Pancreas (tissue), 10 donors: ENCODE measurements at regions of chr1 and their contacts with region 1.

Region 1: DNA sequence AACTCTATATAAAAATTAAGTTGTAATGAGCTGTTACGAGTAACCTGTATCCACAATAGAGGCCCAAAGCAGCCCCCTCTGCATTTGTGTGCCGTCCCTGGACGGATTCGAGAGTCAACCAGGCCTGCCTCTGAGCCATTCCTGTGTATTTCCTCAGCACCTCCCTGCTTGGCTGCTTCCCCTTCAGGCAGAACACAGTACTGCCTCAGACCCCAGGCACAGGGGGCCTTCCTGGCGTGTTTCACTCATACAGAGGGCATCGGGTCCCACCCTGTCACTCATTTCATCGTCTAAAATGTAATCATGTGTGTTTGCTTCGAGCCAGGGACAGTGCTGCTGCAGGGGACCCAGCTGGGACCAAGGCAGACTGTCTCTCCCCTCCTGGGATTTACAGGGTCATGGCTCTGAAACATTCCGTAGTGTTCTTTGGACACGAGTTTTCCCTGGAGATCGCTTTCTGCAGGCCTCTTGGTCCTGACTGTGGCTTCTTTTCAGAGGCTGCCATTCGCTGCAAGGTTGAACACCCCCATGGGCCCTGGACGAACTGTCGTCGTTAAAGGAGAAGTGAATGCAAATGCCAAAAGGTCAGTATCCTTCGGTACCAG is 19.4 kb downstream of the LGALS8 start:
- DNase-seq: no peak
- ATAC-seq: no peak
- H3K4me3 ChIP-seq: no peak overlapping the region
- H3K27ac ChIP-seq: no peak overlapping the region
- H3K4me1 ChIP-seq: no peaks in the 10 kb centered on the region
- H3K27me3 ChIP-seq: no peaks in the 10 kb centered on the region
- CTCF ChIP-seq: no peak

Region 2: GRCh38 chr1:236590553-236591150 is 47.5 kb after region 1 on chr1:
- intact Hi-C with region 1: loop called in 2 of 3 experiments (anchors 10 kb)
- DNase-seq: no peak
- ATAC-seq: no peak
- H3K4me3 ChIP-seq: no peak overlapping the region
- H3K27ac ChIP-seq: no peak overlapping the region
- H3K4me1 ChIP-seq: no peaks in the 10 kb centered on the region
- H3K27me3 ChIP-seq: no peaks in the 10 kb centered on the region
- CTCF ChIP-seq: no peak

Region 3: GRCh38 chr1:237789619-237790018 is 1246.5 kb after region 1 on chr1:
- intact Hi-C with region 1: no loop called
- DNase-seq: no peak
- ATAC-seq: no peak
- H3K4me3 ChIP-seq: no peak overlapping the region
- H3K27ac ChIP-seq: no peak overlapping the region
- H3K4me1 ChIP-seq: no peaks in the 10 kb centered on the region
- H3K27me3 ChIP-seq: no peaks in the 10 kb centered on the region
- CTCF ChIP-seq: no peak